CD4-positive, alpha-beta T cell (primary cell): ENCODE measurements at regions of chr7 and their contacts with region 1.

Region 1: GRCh38 chr7:105268511-105269392 is 120.0 kb downstream of the SRPK2 start:
- DNase-seq: peak in 4 of 14 experiments; percentile 6 to 71 (median 55)
- ATAC-seq: peak; percentile 69
- H3K4me3 ChIP-seq: peak overlapping the region; percentile 59
- H3K4me3 Mint-ChIP-seq: peak overlapping the region; percentile 90
- H3K27ac ChIP-seq: peak overlapping the region in 1 of 2 donors; percentile 26
- H3K27ac Mint-ChIP-seq: peak overlapping the region; percentile 78
- H3K4me1 ChIP-seq: peaks cover 10% of the 10 kb centered on the region
- H3K4me1 Mint-ChIP-seq: peaks cover 74% of the 10 kb centered on the region
- H3K27me3 ChIP-seq: no peaks in the 10 kb centered on the region
- H3K27me3 Mint-ChIP-seq: no peaks in the 10 kb centered on the region
- CTCF ChIP-seq: no peak

Region 2: DNA sequence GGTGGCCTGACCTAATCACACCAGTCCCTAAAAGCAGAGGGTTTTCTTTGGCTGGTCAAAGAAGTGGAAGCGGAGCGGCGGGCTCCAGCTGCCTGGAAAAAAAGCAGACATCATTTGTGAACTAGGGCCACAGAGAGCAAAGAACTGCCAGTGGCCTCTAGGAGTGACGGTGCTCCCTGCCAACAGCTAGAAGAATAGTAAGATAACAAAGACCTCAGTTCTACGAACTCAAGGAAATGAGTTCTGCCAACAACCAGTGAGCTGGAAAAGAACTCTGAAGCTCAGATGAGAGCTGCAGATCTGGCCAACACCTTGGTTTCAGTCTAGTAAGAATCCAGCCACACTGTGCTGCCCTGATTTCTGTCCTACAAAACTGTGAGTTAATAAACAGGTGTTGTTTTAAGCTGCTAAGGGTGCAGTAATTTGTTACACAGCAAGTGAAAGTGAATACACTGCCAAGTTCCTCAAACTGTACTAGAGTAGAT is 58.0 kb before region 1 on chr7:
- CTCF ChIA-PET with region 1: no interaction called
- POLR2A ChIA-PET with region 1: no interaction called
- intact Hi-C with region 1: loop called in 1 of 2 experiments (anchors 5 kb)
- DNase-seq: peak in 1 of 14 experiments; percentile 11
- ATAC-seq: no peak
- H3K4me3 ChIP-seq: no peak overlapping the region
- H3K4me3 Mint-ChIP-seq: peak overlapping the region; percentile 26
- H3K27ac ChIP-seq: peak overlapping the region in 1 of 2 donors; percentile 33
- H3K27ac Mint-ChIP-seq: peak overlapping the region; percentile 72
- H3K4me1 ChIP-seq: peaks cover 27% of the 10 kb centered on the region
- H3K4me1 Mint-ChIP-seq: peaks cover 98% of the 10 kb centered on the region
- H3K27me3 ChIP-seq: no peaks in the 10 kb centered on the region
- H3K27me3 Mint-ChIP-seq: no peaks in the 10 kb centered on the region
- CTCF ChIP-seq: no peak

Region 3: DNA sequence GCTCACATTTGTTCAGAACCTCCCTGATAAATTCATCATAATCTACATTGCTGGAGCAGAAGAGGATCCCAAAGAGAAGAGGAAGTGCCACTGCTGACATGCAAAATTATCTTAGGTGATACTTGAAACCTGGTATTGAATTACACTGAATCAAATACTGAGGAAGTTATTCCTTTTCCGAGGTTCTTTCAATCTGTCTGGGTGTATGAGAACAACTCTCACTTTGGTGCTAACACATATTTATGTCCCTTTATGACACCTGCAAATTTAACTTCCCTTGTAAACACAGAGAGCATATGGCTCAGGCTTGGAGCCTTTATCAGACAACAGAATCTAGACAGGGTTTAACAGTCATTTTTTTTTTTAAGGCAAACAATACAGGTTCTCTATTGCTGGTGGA is 11.4 kb before region 1 on chr7:
- CTCF ChIA-PET with region 1: no interaction called
- POLR2A ChIA-PET with region 1: no interaction called
- intact Hi-C with region 1: loop called in 1 of 2 experiments (anchors 1 kb)
- DNase-seq: no peak
- ATAC-seq: no peak
- H3K4me3 ChIP-seq: no peak overlapping the region
- H3K4me3 Mint-ChIP-seq: no peak overlapping the region
- H3K27ac ChIP-seq: no peak overlapping the region
- H3K27ac Mint-ChIP-seq: no peak overlapping the region
- H3K4me1 ChIP-seq: peaks cover 7% of the 10 kb centered on the region
- H3K4me1 Mint-ChIP-seq: peaks cover 61% of the 10 kb centered on the region
- H3K27me3 ChIP-seq: no peaks in the 10 kb centered on the region
- H3K27me3 Mint-ChIP-seq: no peaks in the 10 kb centered on the region
- CTCF ChIP-seq: no peak

Region 4: DNA sequence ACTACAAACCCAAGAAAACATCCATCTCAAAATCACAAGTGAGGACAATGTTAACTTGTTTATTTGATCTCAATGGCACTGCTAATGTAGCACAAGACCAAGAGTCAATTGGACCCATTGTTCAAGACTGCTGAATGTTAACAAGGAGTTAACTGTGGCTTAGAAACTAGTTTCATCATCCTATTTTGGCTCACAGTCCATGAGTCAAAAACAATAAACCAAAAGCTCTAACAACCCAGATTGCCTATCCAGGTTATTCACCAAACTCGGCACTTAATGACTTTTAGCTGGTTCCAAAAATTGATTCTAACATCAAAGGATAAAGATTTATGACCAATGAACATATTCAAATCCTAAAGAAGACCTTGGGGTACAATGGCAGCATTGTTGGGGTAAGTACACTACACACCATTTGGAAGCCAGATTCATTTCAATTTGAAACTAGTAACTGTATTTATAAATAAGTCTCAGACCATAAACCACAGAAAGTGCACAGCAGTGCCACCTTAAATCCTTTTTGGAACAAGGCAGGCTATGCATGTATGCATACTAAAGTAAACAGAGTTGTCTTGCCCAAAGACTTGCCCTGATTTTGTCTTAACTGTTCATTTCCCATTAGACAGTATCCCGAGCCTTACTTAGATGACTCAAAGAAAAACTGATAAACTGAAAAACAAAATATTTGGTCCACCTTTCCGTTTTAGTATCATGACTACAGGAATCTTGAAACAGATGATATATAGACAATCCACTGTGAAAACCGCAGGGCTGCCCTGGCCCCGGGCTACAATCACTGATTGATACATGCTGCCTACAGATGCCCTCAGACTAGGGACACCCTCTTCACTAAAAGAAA is 35.5 kb after region 1 on chr7:
- CTCF ChIA-PET with region 1: no interaction called
- POLR2A ChIA-PET with region 1: interaction called, 4 read pairs
- intact Hi-C with region 1: loop called in 1 of 2 experiments (anchors 5 kb)
- DNase-seq: no peak
- ATAC-seq: no peak
- H3K4me3 ChIP-seq: no peak overlapping the region
- H3K4me3 Mint-ChIP-seq: peak overlapping the region; percentile 31
- H3K27ac ChIP-seq: no peak overlapping the region
- H3K27ac Mint-ChIP-seq: peak overlapping the region; percentile 9
- H3K4me1 ChIP-seq: peaks cover 16% of the 10 kb centered on the region
- H3K4me1 Mint-ChIP-seq: peaks cover 70% of the 10 kb centered on the region
- H3K27me3 ChIP-seq: no peaks in the 10 kb centered on the region
- H3K27me3 Mint-ChIP-seq: no peaks in the 10 kb centered on the region
- CTCF ChIP-seq: no peak